ENCODE measurements at regions of chr22 and their contacts with region 1.

Region 1: GRCh38 chr22:22195265-22196017 is 49.1 kb upstream of the VPREB1 start:
- DNase-seq: peak; percentile 43 to 79 (median 69)
- ATAC-seq: peak; percentile 90
- H3K4me3 ChIP-seq: no peak overlapping the region
- H3K4me3 Mint-ChIP-seq: no peak overlapping the region
- H3K27ac ChIP-seq: no peak overlapping the region
- H3K27ac Mint-ChIP-seq: no peak overlapping the region
- H3K4me1 ChIP-seq: no peaks in the 10 kb centered on the region
- H3K4me1 Mint-ChIP-seq: peaks cover 0 to 5% (median 0%) of the 10 kb centered on the region in 7 donors
- H3K27me3 ChIP-seq: no peaks in the 10 kb centered on the region
- H3K27me3 Mint-ChIP-seq: peaks cover 8 to 46% (median 28%) of the 10 kb centered on the region in 5 donors

Region 2: DNA sequence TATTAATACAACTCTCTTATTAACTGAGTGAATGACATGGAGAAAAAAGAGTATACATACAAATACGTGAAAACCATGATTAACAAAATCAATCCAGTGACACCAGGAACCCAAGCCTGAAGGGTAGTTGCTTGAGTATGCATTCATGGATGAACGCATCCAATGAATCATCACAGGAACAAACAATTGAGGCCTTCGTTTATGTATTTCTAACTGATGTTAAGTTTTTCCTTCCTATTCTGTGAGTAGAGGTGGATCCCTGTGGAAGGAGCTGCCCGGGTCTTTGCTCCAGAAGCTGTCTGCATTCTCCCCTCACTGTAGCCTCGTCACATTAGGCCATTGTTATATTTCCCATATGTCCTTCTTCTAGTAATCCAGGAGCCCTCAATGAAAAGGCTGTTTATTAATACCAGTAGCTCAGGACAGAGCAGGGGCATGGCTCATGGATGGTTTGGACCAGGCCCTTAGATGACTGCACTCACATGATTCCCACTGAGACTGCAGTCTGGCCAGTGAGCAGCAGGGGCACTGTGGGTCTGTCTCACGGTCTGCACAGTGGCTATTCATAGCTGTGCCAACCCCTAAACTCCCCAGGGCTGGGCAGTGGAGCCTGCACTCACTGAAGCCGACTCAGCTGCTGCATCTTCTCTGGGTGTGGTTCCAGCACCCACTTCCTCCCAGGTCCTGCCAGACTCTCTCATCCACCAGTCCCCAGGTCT is 84.7 kb before region 1 on chr22:
- CTCF ChIA-PET with region 1: no interaction called
- POLR2A ChIA-PET with region 1: no interaction called
- intact Hi-C with region 1: loop called in 1 of 2 experiments (anchors 5 kb)
- DNase-seq: peak in 1 of 9 donors; percentile 53
- ATAC-seq: peak; percentile 95
- H3K4me3 ChIP-seq: no peak overlapping the region
- H3K4me3 Mint-ChIP-seq: peak overlapping the region in 1 of 10 donors; percentile 69
- H3K27ac ChIP-seq: no peak overlapping the region
- H3K27ac Mint-ChIP-seq: peak overlapping the region in 1 of 9 donors; percentile 83
- H3K4me1 ChIP-seq: no peaks in the 10 kb centered on the region
- H3K4me1 Mint-ChIP-seq: peaks cover 0 to 18% (median 8%) of the 10 kb centered on the region in 7 donors
- H3K27me3 ChIP-seq: no peaks in the 10 kb centered on the region
- H3K27me3 Mint-ChIP-seq: peaks cover 0 to 4% (median 0%) of the 10 kb centered on the region in 5 donors

Region 3: DNA sequence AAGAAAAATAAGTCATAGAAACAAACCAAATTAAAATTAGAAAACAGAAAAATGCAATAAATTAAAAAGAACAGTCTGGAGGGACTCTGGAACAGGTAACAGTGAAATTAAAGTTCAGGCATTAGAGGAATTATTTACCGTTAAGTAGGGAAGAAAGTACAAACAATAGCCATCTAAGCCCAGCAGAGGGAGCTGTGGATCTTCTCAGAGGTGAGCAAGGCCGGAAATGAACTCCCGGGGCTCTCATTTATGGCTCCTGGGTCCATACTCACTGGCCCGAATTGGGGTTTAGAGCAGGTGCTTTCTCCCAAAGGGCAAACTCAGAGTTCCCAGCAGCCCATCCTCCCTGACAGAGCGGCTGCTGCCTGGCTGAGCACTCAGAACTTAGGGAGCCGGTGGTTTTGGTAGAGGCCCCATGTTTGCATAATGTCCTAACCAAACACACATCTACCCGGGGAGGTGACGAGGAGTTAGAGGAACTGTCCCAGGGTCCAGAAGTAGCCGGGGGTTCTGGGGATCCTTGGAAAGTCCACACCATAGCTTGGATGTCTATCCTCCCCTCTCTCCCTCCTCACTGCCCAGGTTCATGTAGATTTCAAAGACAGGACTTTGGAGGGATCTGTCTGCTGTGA is 38.6 kb before region 1 on chr22:
- CTCF ChIA-PET with region 1: no interaction called
- POLR2A ChIA-PET with region 1: no interaction called
- intact Hi-C with region 1: loop called (anchors 1 kb)
- DNase-seq: peak; percentile 24 to 66 (median 57)
- ATAC-seq: peak; percentile 93
- H3K4me3 ChIP-seq: no peak overlapping the region
- H3K4me3 Mint-ChIP-seq: peak overlapping the region in 3 of 10 donors; percentile 18 to 42 (median 21)
- H3K27ac ChIP-seq: no peak overlapping the region
- H3K27ac Mint-ChIP-seq: no peak overlapping the region
- H3K4me1 ChIP-seq: no peaks in the 10 kb centered on the region
- H3K4me1 Mint-ChIP-seq: peaks cover 0 to 8% (median 6%) of the 10 kb centered on the region in 7 donors
- H3K27me3 ChIP-seq: no peaks in the 10 kb centered on the region
- H3K27me3 Mint-ChIP-seq: peaks cover 6 to 17% (median 13%) of the 10 kb centered on the region in 5 donors

Region 4: DNA sequence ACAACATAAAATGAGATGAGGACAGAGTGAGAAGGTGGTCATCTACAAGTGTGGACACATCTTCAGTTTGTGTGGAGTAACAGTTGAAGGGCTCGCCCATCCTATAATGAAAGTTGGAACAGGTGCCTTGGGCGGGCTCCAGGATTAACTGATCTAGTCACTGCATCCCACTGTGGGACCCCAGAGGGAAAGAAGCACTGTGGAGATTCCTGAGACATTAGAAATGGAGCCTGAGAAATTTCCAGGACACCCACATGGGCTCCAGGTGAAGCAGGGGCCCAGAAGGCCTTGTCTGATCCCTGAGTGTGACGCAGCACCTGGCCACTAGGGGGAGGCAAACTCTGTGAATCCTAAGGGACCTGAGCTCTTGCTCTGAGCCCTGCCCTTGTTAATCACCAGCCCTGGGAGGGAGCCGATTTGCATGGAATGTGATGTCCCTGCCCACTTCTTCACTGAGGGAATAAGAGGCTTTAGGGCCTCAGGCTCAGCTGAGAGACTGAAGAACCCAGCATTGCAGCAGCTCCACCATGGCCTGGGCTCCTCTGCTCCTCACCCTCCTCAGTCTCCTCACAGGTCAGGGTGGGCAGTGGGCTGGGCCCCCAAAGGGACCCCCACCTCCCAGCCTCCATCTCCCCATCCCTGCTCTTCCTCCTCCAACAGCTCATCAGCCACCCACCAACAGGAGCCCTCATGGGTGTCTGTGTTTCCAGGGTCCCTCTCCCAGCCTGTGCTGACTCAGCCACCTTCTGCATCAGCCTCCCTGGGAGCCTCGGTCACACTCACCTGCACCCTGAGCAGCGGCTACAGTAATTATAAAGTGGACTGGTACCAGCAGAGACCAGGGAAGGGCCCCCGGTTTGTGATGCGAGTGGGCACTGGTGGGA is 147.5 kb after region 1 on chr22:
- CTCF ChIA-PET with region 1: no interaction called
- POLR2A ChIA-PET with region 1: no interaction called
- intact Hi-C with region 1: no loop called
- DNase-seq: peak; percentile 8 to 69 (median 42)
- ATAC-seq: peak; percentile 70
- H3K4me3 ChIP-seq: no peak overlapping the region
- H3K4me3 Mint-ChIP-seq: no peak overlapping the region
- H3K27ac ChIP-seq: no peak overlapping the region
- H3K27ac Mint-ChIP-seq: no peak overlapping the region
- H3K4me1 ChIP-seq: no peaks in the 10 kb centered on the region
- H3K4me1 Mint-ChIP-seq: peaks cover 0 to 4% (median 0%) of the 10 kb centered on the region in 7 donors
- H3K27me3 ChIP-seq: no peaks in the 10 kb centered on the region
- H3K27me3 Mint-ChIP-seq: peaks cover 5 to 28% (median 14%) of the 10 kb centered on the region in 5 donors